HEK293T (cell line): ENCODE measurements at regions of chr6 and their contacts with region 1.

Region 1: GRCh38 chr6:36423101-36423824 is 19.4 kb downstream of the PXT1 start:
- DNase-seq: peak; percentile 95

Region 2: DNA sequence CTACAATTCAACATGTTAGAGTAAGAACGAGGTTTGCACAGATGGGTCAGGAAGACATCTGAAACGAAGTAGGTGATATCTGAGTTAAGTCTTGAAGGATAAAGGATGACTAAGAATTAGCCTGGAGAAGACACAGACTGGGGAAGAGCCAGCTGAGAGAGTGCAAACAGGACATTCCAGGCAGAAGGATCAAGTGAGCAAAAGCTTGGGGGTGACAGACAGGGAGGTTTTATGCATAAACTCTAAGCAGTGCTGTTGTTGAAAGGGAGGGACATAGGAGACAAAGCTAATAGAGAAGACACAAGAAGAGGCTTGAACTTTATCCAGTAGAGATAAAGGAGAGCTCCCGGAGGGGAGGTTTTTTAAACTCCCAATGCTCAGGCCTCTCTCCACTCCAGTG is 20.8 kb before region 1 on chr6:
- CTCF ChIA-PET with region 1: no interaction called
- POLR2A ChIA-PET with region 1: interaction called, 11 read pairs
- DNase-seq: no peak

Region 3: GRCh38 chr6:36436466-36436865 is 13.2 kb after region 1 on chr6:
- CTCF ChIA-PET with region 1: interaction called, 4 read pairs
- POLR2A ChIA-PET with region 1: interaction called, 29 read pairs
- DNase-seq: no peak

Region 4: DNA sequence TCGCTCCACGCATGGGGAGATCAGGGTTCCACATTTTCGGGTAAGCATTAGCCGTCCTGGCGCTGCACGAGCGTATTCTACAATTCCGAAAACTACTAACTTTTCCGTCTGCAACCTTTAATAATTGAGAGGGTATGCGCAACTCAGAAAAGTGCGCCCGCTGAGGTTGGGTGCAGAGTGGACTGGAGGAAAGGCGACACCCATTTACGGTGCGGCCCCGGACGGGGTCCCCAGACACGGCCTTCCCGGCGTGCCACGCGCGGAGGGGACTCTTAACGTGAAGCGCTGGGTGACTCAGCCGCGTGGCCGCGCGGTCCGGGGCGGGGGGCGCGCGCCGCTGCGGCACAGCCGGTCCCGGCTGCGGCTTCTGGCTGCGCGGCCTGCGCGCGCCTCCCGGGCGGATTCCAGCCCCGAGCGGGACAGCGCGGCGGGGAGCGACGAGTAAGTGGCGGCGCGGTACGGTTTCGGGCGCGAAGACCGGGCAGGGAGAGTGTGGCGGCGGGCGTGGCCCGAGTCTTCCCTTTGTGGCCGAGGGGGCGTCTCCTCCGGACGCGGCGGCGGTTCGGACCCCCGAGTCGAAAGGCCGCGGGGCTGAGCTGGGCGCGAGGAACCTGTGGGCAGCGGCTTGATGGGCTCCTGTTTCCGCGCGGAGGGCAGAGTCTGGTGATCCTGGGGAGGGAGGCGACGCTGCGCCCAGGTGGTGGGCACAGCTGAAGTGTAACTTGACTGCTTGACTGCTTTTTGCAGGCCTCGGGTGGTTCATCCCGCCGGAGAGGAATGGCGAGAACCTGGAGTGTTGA is 19.6 kb after region 1 on chr6 and contains the starts of genes KCTD20 and PXT1:
- CTCF ChIA-PET with region 1: interaction called, 3 read pairs
- POLR2A ChIA-PET with region 1: interaction called, 29 read pairs
- DNase-seq: peak; percentile 84